H1 (cell line): ENCODE measurements at regions of chr5 and their contacts with region 1.

Region 1: GRCh38 chr5:62720031-62720441 is 141.4 kb downstream of the LRRC70 start:
- DNase-seq: peak; percentile 25 to 59
- H3K4me3 ChIP-seq: no peak overlapping the region
- H3K27ac ChIP-seq: no peak overlapping the region
- H3K4me1 ChIP-seq: peaks cover 0 to 10% (median 6%) of the 10 kb centered on the region in 4 experiments; a peak in 2 of 7 replicates
- H3K27me3 ChIP-seq: no peaks in the 10 kb centered on the region
- CTCF ChIP-seq: peak; percentile 65 to 79 (median 74)
- EP300 ChIP-seq: no peak
- POLR2A ChIP-seq: no peak
- RAD21 ChIP-seq: peak; percentile 55

Region 2: GRCh38 chr5:62649476-62650113 is 70.4 kb before region 1 on chr5:
- CTCF ChIA-PET with region 1: interaction called, 13 read pairs
- POLR2A ChIA-PET with region 1: no interaction called
- DNase-seq: no peak
- H3K4me3 ChIP-seq: no peak overlapping the region
- H3K27ac ChIP-seq: no peak overlapping the region
- H3K4me1 ChIP-seq: peaks cover 0 to 3% (median 1%) of the 10 kb centered on the region in 4 experiments; a peak in 4 of 7 replicates
- H3K27me3 ChIP-seq: no peaks in the 10 kb centered on the region
- CTCF ChIP-seq: no peak
- EP300 ChIP-seq: no peak
- POLR2A ChIP-seq: no peak
- RAD21 ChIP-seq: no peak

Region 3: GRCh38 chr5:62708481-62709325 is 11.3 kb before region 1 on chr5:
- CTCF ChIA-PET with region 1: interaction called, 20 read pairs
- POLR2A ChIA-PET with region 1: interaction called, 3 read pairs
- DNase-seq: no peak
- H3K4me3 ChIP-seq: no peak overlapping the region
- H3K27ac ChIP-seq: no peak overlapping the region
- H3K4me1 ChIP-seq: no peaks in the 10 kb centered on the region
- H3K27me3 ChIP-seq: no peaks in the 10 kb centered on the region
- CTCF ChIP-seq: no peak
- EP300 ChIP-seq: no peak
- POLR2A ChIP-seq: no peak
- RAD21 ChIP-seq: no peak

Region 4: GRCh38 chr5:62812621-62813255 is 92.7 kb after region 1 on chr5:
- CTCF ChIA-PET with region 1: no interaction called
- POLR2A ChIA-PET with region 1: no interaction called
- DNase-seq: no peak
- H3K4me3 ChIP-seq: no peak overlapping the region
- H3K27ac ChIP-seq: no peak overlapping the region
- H3K4me1 ChIP-seq: no peaks in the 10 kb centered on the region
- H3K27me3 ChIP-seq: no peaks in the 10 kb centered on the region
- CTCF ChIP-seq: no peak
- EP300 ChIP-seq: no peak
- POLR2A ChIP-seq: no peak
- RAD21 ChIP-seq: no peak

Region 5: DNA sequence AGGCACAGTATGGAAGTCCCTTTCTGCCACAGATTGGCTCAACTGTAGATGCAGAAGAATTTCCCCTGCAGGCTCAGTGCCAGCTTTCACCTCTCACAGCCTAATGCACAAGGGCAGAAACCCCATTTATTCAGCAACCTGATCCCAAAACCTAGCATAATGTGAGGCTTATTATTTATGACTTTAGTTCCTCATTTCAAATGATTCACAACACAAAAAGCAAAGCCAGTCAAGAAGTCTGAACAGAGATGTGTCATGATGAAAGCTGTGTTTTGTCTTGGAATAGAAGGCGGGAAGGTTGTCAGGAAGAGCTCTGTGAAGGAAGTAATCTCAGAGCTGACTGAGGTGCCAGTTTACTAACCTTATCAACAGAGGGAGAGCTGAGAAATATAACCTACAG is 228.3 kb after region 1 on chr5:
- CTCF ChIA-PET with region 1: no interaction called
- POLR2A ChIA-PET with region 1: no interaction called
- DNase-seq: no peak
- H3K4me3 ChIP-seq: no peak overlapping the region
- H3K27ac ChIP-seq: no peak overlapping the region
- H3K4me1 ChIP-seq: no peaks in the 10 kb centered on the region; a peak in 1 of 7 replicates
- H3K27me3 ChIP-seq: no peaks in the 10 kb centered on the region
- CTCF ChIP-seq: no peak
- EP300 ChIP-seq: no peak
- POLR2A ChIP-seq: no peak
- RAD21 ChIP-seq: no peak